BJ (cell line): ENCODE measurements at regions of chr9 and their contacts with region 1.

Region 1: DNA sequence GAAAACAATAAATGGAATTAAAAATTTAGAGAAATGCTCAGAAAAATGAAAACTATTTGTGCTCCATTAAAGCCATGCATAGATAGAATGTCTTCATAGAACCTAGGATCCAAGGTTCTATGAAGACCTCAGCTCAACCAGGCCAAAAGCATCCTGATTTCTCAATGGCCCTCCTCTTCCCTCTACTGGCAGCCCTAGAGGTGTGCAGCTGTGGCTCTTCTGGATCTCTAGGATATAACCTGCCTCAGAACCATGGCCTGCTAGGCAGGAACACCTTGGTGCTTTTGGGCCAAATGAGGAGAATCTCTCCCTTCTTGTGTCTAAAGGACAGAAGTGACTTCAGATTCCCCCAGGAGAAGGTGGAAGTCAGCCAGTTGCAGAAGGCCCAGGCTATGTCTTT is 15.1 kb downstream of the IFNA1 start:
- DNase-seq: no peak
- H3K4me3 ChIP-seq: no peak overlapping the region
- H3K27me3 ChIP-seq: no peaks in the 10 kb centered on the region
- CTCF ChIP-seq: peak; percentile 77

Region 2: GRCh38 chr9:21413624-21414023 is 41.7 kb before region 1 on chr9:
- CTCF ChIA-PET with region 1: no interaction called
- POLR2A ChIA-PET with region 1: no interaction called
- DNase-seq: no peak
- H3K4me3 ChIP-seq: no peak overlapping the region
- H3K27me3 ChIP-seq: peaks cover 6% of the 10 kb centered on the region
- CTCF ChIP-seq: peak; percentile 23; the same call in 1 of the 2 replicates

Region 3: GRCh38 chr9:21434202-21435014 is 20.9 kb before region 1 on chr9:
- CTCF ChIA-PET with region 1: interaction called, 53 read pairs
- POLR2A ChIA-PET with region 1: no interaction called
- DNase-seq: no peak
- H3K4me3 ChIP-seq: no peak overlapping the region
- H3K27me3 ChIP-seq: peaks cover 5% of the 10 kb centered on the region; the same call in 1 of the 2 replicates
- CTCF ChIP-seq: peak; percentile 60